ENCODE measurements at regions of chr1 and their contacts with region 1.

Region 1: DNA sequence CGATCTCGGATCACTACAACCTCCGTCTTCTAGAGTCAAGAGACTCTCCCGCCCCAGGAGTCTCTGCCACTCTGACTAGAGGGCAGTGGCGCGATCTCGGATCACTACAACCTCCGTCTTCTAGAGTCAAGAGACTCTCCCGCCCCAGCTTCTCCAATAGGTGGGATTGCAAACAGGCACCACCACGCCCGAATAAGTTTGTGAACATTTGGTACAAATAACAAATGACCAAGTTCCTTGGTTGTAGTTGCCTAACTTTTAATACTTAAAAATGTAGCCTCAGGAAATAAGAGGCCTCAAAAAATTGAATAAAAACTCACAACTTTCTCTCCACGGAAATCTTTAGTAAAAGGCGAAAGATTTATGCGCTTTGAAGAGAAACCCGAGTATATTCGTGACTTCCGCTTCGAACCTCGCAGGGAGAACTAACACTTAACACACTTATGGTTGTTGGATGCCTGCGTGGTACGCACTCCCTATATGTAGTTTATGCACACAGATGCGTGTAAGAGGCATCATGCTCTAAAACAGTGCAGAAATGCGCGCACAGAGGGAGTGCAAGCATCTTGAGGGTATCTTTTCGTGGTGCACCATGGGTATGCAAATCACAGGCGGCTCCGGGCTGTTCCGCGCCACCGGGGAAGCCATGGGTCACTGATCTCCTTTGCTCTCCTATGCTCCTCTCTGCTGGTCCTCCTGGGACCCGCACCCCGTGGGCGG is 11.4 kb downstream of the BTBD19 start:
- DNase-seq: peak; percentile 95
- ATAC-seq: peak; percentile 82
- H3K4me3 ChIP-seq: peak overlapping the region; percentile 56 to 80 (median 66)
- H3K4me3 Mint-ChIP-seq: peak overlapping the region; percentile 93
- H3K27ac ChIP-seq: peak overlapping the region; percentile 99 to 100
- H3K27ac Mint-ChIP-seq: peak overlapping the region; percentile 100
- H3K4me1 ChIP-seq: peaks cover 16 to 24% of the 10 kb centered on the region in 2 donors
- H3K4me1 Mint-ChIP-seq: peaks cover 35% of the 10 kb centered on the region
- H3K27me3 ChIP-seq: no peaks in the 10 kb centered on the region
- H3K27me3 Mint-ChIP-seq: no peaks in the 10 kb centered on the region
- CTCF ChIP-seq: no peak

Region 2: GRCh38 chr1:44807262-44808062 is 12.3 kb before region 1 on chr1 and contains the start of gene DYNLT4:
- CTCF ChIA-PET with region 1: interaction called, 30 read pairs
- POLR2A ChIA-PET with region 1: interaction called, 59 read pairs
- intact Hi-C with region 1: loop called (anchors 1 kb)
- DNase-seq: peak; percentile 87
- ATAC-seq: peak; percentile 58
- H3K4me3 ChIP-seq: peak within 1 kb of the TSS in 1 of 5 experiments; percentile 10
- H3K4me3 Mint-ChIP-seq: peak within 1 kb of the TSS; percentile 66
- H3K27ac ChIP-seq: peak within 1 kb of the TSS; percentile 91 to 95
- H3K27ac Mint-ChIP-seq: peak within 1 kb of the TSS; percentile 99
- H3K4me1 ChIP-seq: peaks cover 44 to 59% of the 10 kb centered on the region in 2 donors
- H3K4me1 Mint-ChIP-seq: peaks cover 66% of the 10 kb centered on the region
- H3K27me3 ChIP-seq: no peaks in the 10 kb centered on the region
- H3K27me3 Mint-ChIP-seq: no peaks in the 10 kb centered on the region
- CTCF ChIP-seq: no peak
- total RNA-seq, gene DYNLT4: 0.39 TPM in 1 of 2 replicates, not detected in the other

Region 3: DNA sequence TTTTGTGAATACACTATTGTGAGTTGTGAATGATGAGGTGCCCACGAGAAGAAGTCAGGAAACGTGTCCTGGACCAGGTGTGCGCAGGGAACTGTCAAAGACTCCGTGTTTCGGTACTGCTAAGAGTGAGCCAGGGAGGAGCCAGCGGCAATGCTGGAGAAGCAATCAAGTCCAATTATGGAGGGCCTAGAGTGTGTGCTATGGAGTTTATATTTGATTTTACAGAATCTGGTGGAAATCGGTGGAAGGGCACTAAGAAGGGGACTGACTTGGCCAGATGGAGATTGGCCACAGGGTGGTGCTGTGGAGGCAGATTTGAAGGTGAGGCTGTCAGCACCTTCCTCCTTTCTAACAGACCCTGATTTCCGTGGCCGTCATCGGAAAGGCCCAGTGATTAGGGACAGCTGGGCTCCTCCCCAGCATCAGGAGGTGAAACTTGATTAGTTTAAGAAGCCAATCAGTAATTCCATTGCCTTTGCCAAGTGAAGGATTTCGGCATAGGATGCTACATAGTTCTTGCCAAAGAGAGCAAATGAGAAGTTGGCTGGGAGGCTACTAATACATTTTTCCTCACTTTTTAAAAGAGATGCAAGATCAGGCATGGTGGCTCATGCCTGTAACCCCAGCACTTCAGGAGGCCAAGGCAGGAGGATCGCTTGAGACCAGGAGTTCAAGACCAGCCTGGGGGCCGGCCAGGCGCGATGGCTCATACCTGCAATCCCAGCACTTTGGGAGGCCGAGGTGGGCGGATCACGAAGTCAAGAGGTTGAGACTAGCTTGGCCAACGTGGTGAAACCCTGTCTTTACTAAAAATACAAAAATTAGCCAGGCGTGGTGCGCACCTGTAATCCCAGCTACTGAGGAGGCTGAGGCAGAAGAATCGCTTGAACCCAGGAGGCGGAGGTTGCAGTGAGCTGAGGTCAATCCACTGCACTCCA is 16.2 kb after region 1 on chr1:
- CTCF ChIA-PET with region 1: interaction called, 10 read pairs
- POLR2A ChIA-PET with region 1: interaction called, 3 read pairs
- intact Hi-C with region 1: loop called (anchors 1 kb)
- DNase-seq: peak; percentile 89
- ATAC-seq: peak; percentile 98
- H3K4me3 ChIP-seq: no peak overlapping the region
- H3K4me3 Mint-ChIP-seq: peak overlapping the region; percentile 62
- H3K27ac ChIP-seq: no peak overlapping the region
- H3K27ac Mint-ChIP-seq: peak overlapping the region; percentile 55
- H3K4me1 ChIP-seq: peaks cover 0 to 7% of the 10 kb centered on the region in 2 donors
- H3K4me1 Mint-ChIP-seq: peaks cover 11% of the 10 kb centered on the region
- H3K27me3 ChIP-seq: no peaks in the 10 kb centered on the region
- H3K27me3 Mint-ChIP-seq: peaks cover 6% of the 10 kb centered on the region
- CTCF ChIP-seq: peak; percentile 85

Region 4: GRCh38 chr1:44903011-44903680 is 83.4 kb after region 1 on chr1:
- CTCF ChIA-PET with region 1: no interaction called
- POLR2A ChIA-PET with region 1: no interaction called
- intact Hi-C with region 1: no loop called
- DNase-seq: no peak
- ATAC-seq: no peak
- H3K4me3 ChIP-seq: no peak overlapping the region
- H3K4me3 Mint-ChIP-seq: no peak overlapping the region
- H3K27ac ChIP-seq: no peak overlapping the region
- H3K27ac Mint-ChIP-seq: no peak overlapping the region
- H3K4me1 ChIP-seq: no peaks in the 10 kb centered on the region
- H3K4me1 Mint-ChIP-seq: peaks cover 2% of the 10 kb centered on the region
- H3K27me3 ChIP-seq: no peaks in the 10 kb centered on the region
- H3K27me3 Mint-ChIP-seq: no peaks in the 10 kb centered on the region
- CTCF ChIP-seq: no peak

Region 5: DNA sequence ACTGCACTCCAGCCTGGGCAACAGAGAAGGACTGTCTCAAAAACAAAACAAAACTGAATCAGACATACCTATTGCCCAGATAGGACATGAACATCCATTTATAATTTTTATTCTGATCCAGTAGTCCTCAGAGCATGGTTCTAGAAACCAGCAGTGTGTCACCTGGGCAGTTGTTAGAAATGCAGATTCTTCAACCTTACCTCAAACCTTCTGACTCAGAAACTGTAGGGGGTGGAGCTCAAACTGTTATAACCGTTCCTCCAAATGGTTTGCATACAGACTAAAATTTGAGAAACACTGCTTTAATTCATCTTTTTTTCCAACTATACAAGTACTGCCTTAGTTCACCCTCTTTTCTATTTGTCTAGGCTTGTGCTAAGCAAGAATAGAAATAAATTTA is 770.1 kb after region 1 on chr1:
- CTCF ChIA-PET with region 1: no interaction called
- POLR2A ChIA-PET with region 1: no interaction called
- intact Hi-C with region 1: no loop called
- DNase-seq: no peak
- ATAC-seq: no peak
- H3K4me3 ChIP-seq: no peak overlapping the region
- H3K4me3 Mint-ChIP-seq: no peak overlapping the region
- H3K27ac ChIP-seq: no peak overlapping the region
- H3K27ac Mint-ChIP-seq: no peak overlapping the region
- H3K4me1 ChIP-seq: peaks cover 28 to 38% of the 10 kb centered on the region in 2 donors
- H3K4me1 Mint-ChIP-seq: peaks cover 43% of the 10 kb centered on the region
- H3K27me3 ChIP-seq: no peaks in the 10 kb centered on the region
- H3K27me3 Mint-ChIP-seq: no peaks in the 10 kb centered on the region
- CTCF ChIP-seq: no peak